OCI-LY7 (cell line): ENCODE measurements at regions of chr15 and their contacts with region 1.

Region 1: GRCh38 chr15:95850834-95851233 is 479.7 kb upstream of the NR2F2 start:
- DNase-seq: no peak
- H3K4me3 ChIP-seq: no peak overlapping the region
- H3K27ac ChIP-seq: no peak overlapping the region
- H3K4me1 ChIP-seq: no peaks in the 10 kb centered on the region
- CTCF ChIP-seq: peak; percentile 45

Region 2: DNA sequence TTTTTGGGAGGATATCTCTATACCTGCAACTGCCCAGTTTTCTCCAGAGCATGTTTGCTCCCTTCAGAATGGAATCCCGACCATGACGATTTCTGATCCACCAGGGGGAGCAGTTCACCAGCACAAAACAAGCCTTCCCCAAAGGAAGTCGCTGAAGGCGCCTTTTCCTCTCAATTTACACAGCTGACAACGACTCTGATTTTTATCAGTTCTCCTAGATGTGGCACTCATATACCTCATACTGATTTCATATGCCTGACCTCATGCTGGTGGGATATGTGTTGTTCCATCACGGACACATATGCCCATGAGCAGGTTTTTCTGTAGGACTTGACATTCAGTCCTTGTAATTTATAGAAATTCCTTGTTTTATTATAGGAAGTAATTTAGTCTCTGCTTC is 591.3 kb before region 1 on chr15:
- CTCF ChIA-PET with region 1: no interaction called
- POLR2A ChIA-PET with region 1: no interaction called
- intact Hi-C with region 1: loop called (anchors 2 kb)
- DNase-seq: peak; percentile 34
- H3K4me3 ChIP-seq: no peak overlapping the region
- H3K27ac ChIP-seq: no peak overlapping the region
- H3K4me1 ChIP-seq: no peaks in the 10 kb centered on the region
- CTCF ChIP-seq: peak; percentile 82

Region 3: DNA sequence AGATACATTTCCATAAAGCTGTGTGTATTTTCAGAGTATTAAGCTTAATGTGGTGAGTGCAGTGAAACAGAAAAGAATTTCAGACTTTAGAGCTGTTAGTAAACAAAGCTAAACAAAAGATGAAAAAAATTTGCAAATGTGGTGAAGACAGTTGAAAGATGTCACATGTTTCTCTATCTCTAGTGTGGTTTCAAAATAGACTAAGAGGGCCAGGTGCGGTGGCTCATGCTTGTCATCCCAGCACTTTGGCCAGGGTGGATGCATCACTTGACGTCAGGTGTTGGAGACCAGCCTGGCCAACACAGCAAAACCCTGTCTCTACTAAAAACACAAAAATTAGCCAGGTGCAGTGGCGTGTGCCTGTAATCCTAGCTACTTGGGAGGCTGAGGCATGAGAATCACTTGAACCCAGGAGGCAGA is 13.6 kb after region 1 on chr15:
- CTCF ChIA-PET with region 1: no interaction called
- POLR2A ChIA-PET with region 1: no interaction called
- intact Hi-C with region 1: no loop called
- DNase-seq: no peak
- H3K4me3 ChIP-seq: no peak overlapping the region
- H3K27ac ChIP-seq: no peak overlapping the region
- H3K4me1 ChIP-seq: no peaks in the 10 kb centered on the region
- CTCF ChIP-seq: no peak